CD8-positive, alpha-beta T cell (primary cell): ENCODE measurements at regions of chr1 and their contacts with region 1.

Region 1: DNA sequence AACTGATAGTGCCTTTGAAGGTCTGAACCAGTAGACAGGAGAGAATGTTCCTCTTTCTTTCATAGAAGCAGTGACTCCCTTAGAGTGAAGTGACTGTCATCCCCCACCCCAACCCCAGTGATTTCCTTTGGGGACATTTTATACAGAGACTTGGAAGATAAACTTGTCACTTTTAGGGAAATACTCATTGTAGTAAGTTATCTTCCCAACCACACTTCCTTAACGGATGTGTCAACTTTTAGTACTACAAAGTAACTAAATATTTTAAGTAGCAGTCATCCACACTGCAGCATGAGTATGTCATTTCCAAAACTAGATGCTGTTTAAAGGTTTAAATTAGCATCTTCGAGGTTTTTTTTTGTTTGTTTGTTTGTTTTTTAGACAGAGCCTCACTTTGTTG is 13.7 kb downstream of the LRRC8B start:
- DNase-seq: no peak
- ATAC-seq: no peak
- H3K4me3 ChIP-seq: no peak overlapping the region
- H3K4me3 Mint-ChIP-seq: no peak overlapping the region
- H3K27ac ChIP-seq: no peak overlapping the region
- H3K27ac Mint-ChIP-seq: no peak overlapping the region
- H3K4me1 ChIP-seq: peaks cover 9% of the 10 kb centered on the region
- H3K4me1 Mint-ChIP-seq: peaks cover 67% of the 10 kb centered on the region
- H3K27me3 ChIP-seq: no peaks in the 10 kb centered on the region
- H3K27me3 Mint-ChIP-seq: no peaks in the 10 kb centered on the region
- CTCF ChIP-seq: no peak

Region 2: GRCh38 chr1:89407360-89407759 is 131.0 kb before region 1 on chr1:
- CTCF ChIA-PET with region 1: no interaction called
- POLR2A ChIA-PET with region 1: no interaction called
- intact Hi-C with region 1: no loop called
- DNase-seq: peak in 2 of 9 experiments; percentile 7 to 22
- ATAC-seq: no peak
- H3K4me3 ChIP-seq: peak overlapping the region; percentile 24 to 38
- H3K4me3 Mint-ChIP-seq: peak overlapping the region; percentile 85
- H3K27ac ChIP-seq: no peak overlapping the region
- H3K27ac Mint-ChIP-seq: peak overlapping the region; percentile 63
- H3K4me1 ChIP-seq: peaks cover 15% of the 10 kb centered on the region
- H3K4me1 Mint-ChIP-seq: peaks cover 27% of the 10 kb centered on the region
- H3K27me3 ChIP-seq: no peaks in the 10 kb centered on the region
- H3K27me3 Mint-ChIP-seq: no peaks in the 10 kb centered on the region
- CTCF ChIP-seq: no peak

Region 3: DNA sequence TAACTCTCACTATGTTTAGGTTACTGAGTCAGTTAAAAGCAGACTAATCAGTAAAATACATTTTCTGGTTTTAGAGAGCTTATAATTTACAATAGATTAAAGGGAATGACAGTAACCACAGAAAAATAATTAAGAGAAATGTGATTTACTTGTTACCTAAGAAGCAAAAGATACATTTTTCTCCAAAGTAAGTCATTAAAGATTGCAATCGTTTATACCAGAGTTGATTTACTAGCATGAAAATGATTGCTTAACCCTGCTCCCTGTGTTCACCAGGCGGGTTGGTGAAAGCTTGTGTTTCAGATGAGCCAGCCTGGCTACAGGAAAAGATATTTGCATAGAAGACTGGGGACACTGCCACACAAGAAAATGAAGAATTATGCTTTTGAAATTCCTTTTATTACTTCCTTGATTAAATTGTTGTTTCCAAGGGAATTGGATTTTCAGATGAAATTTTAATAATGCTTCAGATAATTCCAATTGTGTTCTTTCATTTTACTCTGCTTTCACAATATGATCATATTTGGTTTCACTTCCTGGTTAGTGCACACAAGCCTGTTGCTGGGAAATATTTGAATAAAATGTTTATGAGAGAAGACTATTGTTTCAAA is 14.2 kb after region 1 on chr1:
- CTCF ChIA-PET with region 1: no interaction called
- POLR2A ChIA-PET with region 1: no interaction called
- intact Hi-C with region 1: loop called in 1 of 2 experiments (anchors 2 kb)
- DNase-seq: peak in 1 of 9 experiments; percentile 26
- ATAC-seq: no peak
- H3K4me3 ChIP-seq: no peak overlapping the region
- H3K4me3 Mint-ChIP-seq: peak overlapping the region; percentile 69
- H3K27ac ChIP-seq: no peak overlapping the region
- H3K27ac Mint-ChIP-seq: peak overlapping the region; percentile 47
- H3K4me1 ChIP-seq: peaks cover 3% of the 10 kb centered on the region
- H3K4me1 Mint-ChIP-seq: peaks cover 65% of the 10 kb centered on the region
- H3K27me3 ChIP-seq: no peaks in the 10 kb centered on the region
- H3K27me3 Mint-ChIP-seq: no peaks in the 10 kb centered on the region
- CTCF ChIP-seq: no peak

Region 4: GRCh38 chr1:90417126-90417525 is 878.8 kb after region 1 on chr1:
- CTCF ChIA-PET with region 1: no interaction called
- POLR2A ChIA-PET with region 1: no interaction called
- intact Hi-C with region 1: no loop called
- DNase-seq: no peak
- ATAC-seq: no peak
- H3K4me3 ChIP-seq: no peak overlapping the region
- H3K4me3 Mint-ChIP-seq: no peak overlapping the region
- H3K27ac ChIP-seq: no peak overlapping the region
- H3K27ac Mint-ChIP-seq: no peak overlapping the region
- H3K4me1 ChIP-seq: no peaks in the 10 kb centered on the region
- H3K4me1 Mint-ChIP-seq: no peaks in the 10 kb centered on the region
- H3K27me3 ChIP-seq: no peaks in the 10 kb centered on the region
- H3K27me3 Mint-ChIP-seq: no peaks in the 10 kb centered on the region
- CTCF ChIP-seq: no peak